Activated B cell treated with CpG ODN at 0.5 μM for 24 hours (primary cell): ENCODE measurements at regions of chr14 and their contacts with region 1.

Region 1: GRCh38 chr14:91244501-91244901 is at the start of gene GPR68:
- DNase-seq: no peak
- ATAC-seq: no peak
- H3K4me3 Mint-ChIP-seq: peak within 1 kb of the TSS; percentile 75
- H3K27ac Mint-ChIP-seq: peak within 1 kb of the TSS; percentile 91
- H3K4me1 Mint-ChIP-seq: peaks cover 61% of the 10 kb centered on the region
- H3K27me3 Mint-ChIP-seq: no peaks in the 10 kb centered on the region
- CTCF ChIP-seq: no peak
- total RNA-seq, gene GPR68: 1.4 and 1.8 TPM in 2 replicates

Region 2: DNA sequence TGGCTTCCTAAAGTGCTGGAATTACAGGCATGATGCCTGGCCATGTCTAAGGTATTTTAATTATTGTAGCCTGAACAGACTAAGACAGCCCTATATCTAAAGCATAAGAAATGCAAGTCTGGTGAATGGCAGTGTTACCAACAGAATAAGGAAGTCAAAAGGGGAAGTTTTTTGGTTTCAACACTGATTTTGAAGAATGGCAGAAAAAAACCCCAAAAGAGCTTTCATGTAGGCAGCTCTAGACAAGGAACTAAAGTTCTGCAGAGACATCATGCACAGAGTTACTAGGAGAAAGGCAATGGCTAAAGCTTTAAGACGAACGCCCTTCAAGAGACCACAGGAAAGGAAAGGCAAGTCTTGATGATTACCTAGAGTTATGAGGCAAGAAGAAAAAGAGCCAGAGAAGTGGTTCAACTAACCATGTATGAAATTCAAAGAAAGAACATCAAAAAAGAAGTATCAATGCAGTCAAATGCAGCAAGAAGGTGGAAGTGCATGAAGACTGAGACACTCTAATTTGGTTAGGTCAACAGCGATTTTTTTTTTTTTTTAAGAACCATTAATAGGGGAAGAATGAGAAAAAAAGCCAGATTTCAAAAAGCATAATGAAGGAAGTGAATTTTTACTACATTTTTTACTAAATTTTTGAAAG is 234.9 kb before region 1 on chr14:
- CTCF ChIA-PET with region 1: no interaction called
- POLR2A ChIA-PET with region 1: no interaction called
- intact Hi-C with region 1: loop called (anchors 5 kb)
- DNase-seq: no peak
- ATAC-seq: peak; percentile 87
- H3K4me3 Mint-ChIP-seq: peak overlapping the region; percentile 75
- H3K27ac Mint-ChIP-seq: peak overlapping the region; percentile 92
- H3K4me1 Mint-ChIP-seq: peaks cover 57% of the 10 kb centered on the region
- H3K27me3 Mint-ChIP-seq: no peaks in the 10 kb centered on the region
- CTCF ChIP-seq: no peak

Region 3: GRCh38 chr14:91228112-91229004 is 16.1 kb before region 1 on chr14:
- CTCF ChIA-PET with region 1: interaction called, 4 read pairs
- POLR2A ChIA-PET with region 1: interaction called, 101 read pairs
- intact Hi-C with region 1: loop called (anchors 1 kb)
- DNase-seq: peak; percentile 53
- ATAC-seq: peak; percentile 88
- H3K4me3 Mint-ChIP-seq: peak overlapping the region; percentile 63
- H3K27ac Mint-ChIP-seq: peak overlapping the region; percentile 89
- H3K4me1 Mint-ChIP-seq: peaks cover 71% of the 10 kb centered on the region
- H3K27me3 Mint-ChIP-seq: no peaks in the 10 kb centered on the region
- CTCF ChIP-seq: no peak

Region 4: GRCh38 chr14:91286530-91286937 is 42.0 kb after region 1 on chr14:
- CTCF ChIA-PET with region 1: interaction called, 21 read pairs
- POLR2A ChIA-PET with region 1: interaction called, 5 read pairs
- intact Hi-C with region 1: loop called (anchors 2 kb)
- DNase-seq: peak; percentile 64
- ATAC-seq: peak; percentile 88
- H3K4me3 Mint-ChIP-seq: no peak overlapping the region
- H3K27ac Mint-ChIP-seq: no peak overlapping the region
- H3K4me1 Mint-ChIP-seq: peaks cover 24% of the 10 kb centered on the region
- H3K27me3 Mint-ChIP-seq: no peaks in the 10 kb centered on the region
- CTCF ChIP-seq: peak; percentile 90

Region 5: GRCh38 chr14:91339671-91340369 is 95.3 kb after region 1 on chr14:
- CTCF ChIA-PET with region 1: no interaction called
- POLR2A ChIA-PET with region 1: no interaction called
- intact Hi-C with region 1: no loop called
- DNase-seq: no peak
- ATAC-seq: no peak
- H3K4me3 Mint-ChIP-seq: no peak overlapping the region
- H3K27ac Mint-ChIP-seq: peak overlapping the region; percentile 24
- H3K4me1 Mint-ChIP-seq: peaks cover 31% of the 10 kb centered on the region
- H3K27me3 Mint-ChIP-seq: no peaks in the 10 kb centered on the region
- CTCF ChIP-seq: no peak

Region 6: DNA sequence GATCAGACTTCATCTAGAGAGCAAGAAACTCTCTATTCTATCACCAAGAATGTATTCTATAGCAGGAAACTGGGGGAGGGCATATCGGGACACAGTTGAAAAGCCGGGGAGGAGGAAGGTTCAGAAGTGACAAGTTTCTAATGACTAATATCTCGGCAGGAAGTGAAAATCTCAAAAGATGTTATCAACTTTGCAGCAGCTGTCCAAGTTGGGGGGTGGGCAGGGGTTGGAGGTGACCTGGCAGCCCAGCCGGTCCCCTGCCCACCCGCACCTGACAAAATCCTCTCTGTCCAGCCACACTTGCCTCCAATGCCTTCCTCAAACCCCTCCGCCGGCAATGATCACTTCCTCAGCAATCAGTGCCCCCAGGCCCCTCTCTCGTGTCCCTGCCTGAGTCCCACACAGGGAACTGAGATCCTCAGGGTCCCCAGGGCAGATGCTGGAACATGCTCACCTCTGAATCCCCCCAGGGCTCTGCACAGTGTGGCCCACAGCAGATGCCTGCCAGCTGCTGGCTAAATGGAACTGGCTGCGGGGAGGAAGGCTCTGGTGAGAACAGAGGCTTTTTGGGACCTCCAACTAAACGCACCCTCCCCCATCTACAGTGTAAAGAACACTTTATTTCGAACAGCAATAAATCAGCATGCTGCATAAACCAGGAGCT is 129.2 kb after region 1 on chr14:
- CTCF ChIA-PET with region 1: no interaction called
- POLR2A ChIA-PET with region 1: interaction called, 7 read pairs
- intact Hi-C with region 1: loop called (anchors 5 kb)
- DNase-seq: peak; percentile 66
- ATAC-seq: peak; percentile 73
- H3K4me3 Mint-ChIP-seq: peak overlapping the region; percentile 78
- H3K27ac Mint-ChIP-seq: peak overlapping the region; percentile 87
- H3K4me1 Mint-ChIP-seq: peaks cover 98% of the 10 kb centered on the region
- H3K27me3 Mint-ChIP-seq: no peaks in the 10 kb centered on the region
- CTCF ChIP-seq: no peak

Region 7: GRCh38 chr14:91385224-91385623 is 140.7 kb after region 1 on chr14:
- CTCF ChIA-PET with region 1: no interaction called
- POLR2A ChIA-PET with region 1: no interaction called
- intact Hi-C with region 1: no loop called
- DNase-seq: no peak
- ATAC-seq: no peak
- H3K4me3 Mint-ChIP-seq: no peak overlapping the region
- H3K27ac Mint-ChIP-seq: no peak overlapping the region
- H3K4me1 Mint-ChIP-seq: peaks cover 82% of the 10 kb centered on the region
- H3K27me3 Mint-ChIP-seq: no peaks in the 10 kb centered on the region
- CTCF ChIP-seq: no peak

Region 8: GRCh38 chr14:91396959-91397815 is 152.7 kb after region 1 on chr14:
- CTCF ChIA-PET with region 1: no interaction called
- POLR2A ChIA-PET with region 1: no interaction called
- intact Hi-C with region 1: no loop called
- DNase-seq: no peak
- ATAC-seq: peak; percentile 56
- H3K4me3 Mint-ChIP-seq: peak overlapping the region; percentile 66
- H3K27ac Mint-ChIP-seq: peak overlapping the region; percentile 79
- H3K4me1 Mint-ChIP-seq: peaks cover 91% of the 10 kb centered on the region
- H3K27me3 Mint-ChIP-seq: no peaks in the 10 kb centered on the region
- CTCF ChIP-seq: no peak

Region 9: DNA sequence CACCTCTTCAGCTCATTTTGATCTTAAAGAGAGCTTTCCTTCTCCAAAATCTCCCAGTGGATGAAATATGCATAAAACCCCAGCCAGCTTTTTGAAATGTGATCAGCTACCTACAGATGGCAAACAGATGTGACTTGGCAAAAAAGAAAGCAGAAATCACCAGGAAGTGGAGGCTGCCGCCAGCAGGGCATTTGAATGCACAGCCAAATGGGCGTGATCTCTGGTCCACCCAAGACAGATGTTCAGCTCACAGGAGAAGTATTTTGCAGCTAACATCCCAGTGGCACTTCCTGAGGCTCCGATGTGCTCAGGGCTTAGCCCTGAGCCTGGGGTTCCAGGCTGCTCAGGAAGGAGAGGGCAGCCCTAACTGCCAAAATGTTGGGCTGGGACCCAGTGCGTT is 1425.7 kb after region 1 on chr14:
- CTCF ChIA-PET with region 1: no interaction called
- POLR2A ChIA-PET with region 1: interaction called, 10 read pairs
- intact Hi-C with region 1: no loop called
- DNase-seq: no peak
- ATAC-seq: no peak
- H3K4me3 Mint-ChIP-seq: peak overlapping the region; percentile 13
- H3K27ac Mint-ChIP-seq: peak overlapping the region; percentile 52
- H3K4me1 Mint-ChIP-seq: peaks cover 84% of the 10 kb centered on the region
- H3K27me3 Mint-ChIP-seq: no peaks in the 10 kb centered on the region
- CTCF ChIP-seq: no peak